AG04450 (cell line): ENCODE measurements at regions of chr16 and their contacts with region 1.

Region 1: GRCh38 chr16:67159593-67160406 is at the starts of genes FBXL8 and TRADD:
- DNase-seq: no peak
- H3K4me3 ChIP-seq: peak within 1 kb of the TSS; percentile 92
- H3K27ac ChIP-seq: peak within 1 kb of the TSS; percentile 31
- H3K27me3 ChIP-seq: peaks cover 30% of the 10 kb centered on the region
- CTCF ChIP-seq: peak; percentile 64
- polyA plus RNA-seq, gene FBXL8: 2.7 and 3.2 TPM in 2 replicates
- polyA plus RNA-seq, gene TRADD: 9.4 and 10.9 TPM in 2 replicates

Region 2: DNA sequence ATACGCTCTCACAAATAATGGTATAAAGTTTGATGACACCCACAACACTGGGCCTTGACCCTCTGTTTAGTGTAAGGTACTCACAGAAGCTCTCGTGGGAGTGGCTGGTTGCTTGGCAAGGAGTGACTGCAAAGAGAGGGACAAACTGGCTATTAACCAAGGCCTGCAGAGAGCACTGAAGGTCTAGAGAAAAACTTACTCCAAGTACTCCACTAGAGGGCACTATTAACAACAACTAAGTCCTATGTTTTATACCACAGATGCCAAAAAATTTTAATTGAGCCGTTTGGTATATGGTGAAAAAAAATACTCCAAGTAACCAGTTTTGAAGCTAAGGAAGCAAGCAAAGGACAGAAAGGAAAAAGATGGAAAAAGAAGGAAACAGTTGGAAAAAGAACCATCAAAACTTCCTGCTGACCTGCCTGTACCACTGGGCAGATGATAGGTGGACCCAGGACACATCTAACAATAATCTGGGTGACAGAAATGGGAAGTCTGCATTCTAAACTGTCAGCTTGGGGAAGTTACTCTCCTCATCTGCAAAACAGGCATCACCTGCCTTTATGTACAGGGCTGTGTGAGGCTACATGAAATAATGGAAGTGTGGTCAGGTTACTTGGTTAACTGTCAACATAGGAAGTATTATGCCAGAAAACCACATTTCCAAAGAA is 431.5 kb before region 1 on chr16:
- CTCF ChIA-PET with region 1: no interaction called
- POLR2A ChIA-PET with region 1: no interaction called
- DNase-seq: no peak
- H3K4me3 ChIP-seq: no peak overlapping the region
- H3K27ac ChIP-seq: no peak overlapping the region
- H3K27me3 ChIP-seq: no peaks in the 10 kb centered on the region
- CTCF ChIP-seq: peak; percentile 66

Region 3: DNA sequence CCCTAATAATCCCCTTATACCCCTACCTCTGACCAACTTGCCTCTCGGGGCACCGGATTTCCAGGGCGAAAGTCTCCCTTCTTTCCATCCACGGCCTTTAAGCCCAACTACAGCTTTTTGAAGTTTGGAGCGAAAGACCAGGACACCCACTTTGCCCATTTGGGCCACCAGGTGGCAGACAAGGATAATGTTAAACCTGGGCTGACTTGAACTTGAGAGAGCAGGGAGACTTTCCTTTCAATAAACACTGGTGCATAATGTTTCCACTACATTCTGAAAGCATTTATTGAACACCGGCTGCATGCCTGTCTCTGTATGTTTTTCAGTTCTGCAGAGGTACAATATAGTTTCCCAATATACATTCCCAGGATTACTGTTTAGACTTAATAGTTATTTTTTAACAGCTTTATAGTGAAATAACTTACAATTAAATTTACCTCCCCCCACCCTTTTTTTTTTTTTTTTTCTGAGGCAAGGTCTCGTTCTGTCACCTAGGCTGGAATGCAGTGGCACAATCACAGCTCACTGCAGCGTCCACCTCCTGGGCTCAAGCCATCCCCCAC is 205.6 kb before region 1 on chr16:
- CTCF ChIA-PET with region 1: interaction called, 29 read pairs
- POLR2A ChIA-PET with region 1: interaction called, 4 read pairs
- DNase-seq: peak; percentile 59
- H3K4me3 ChIP-seq: no peak overlapping the region
- H3K27ac ChIP-seq: no peak overlapping the region
- H3K27me3 ChIP-seq: peaks cover 21% of the 10 kb centered on the region
- CTCF ChIP-seq: peak; percentile 89

Region 4: GRCh38 chr16:66977341-66978113 is 182.3 kb before region 1 on chr16:
- CTCF ChIA-PET with region 1: interaction called, 24 read pairs
- POLR2A ChIA-PET with region 1: no interaction called
- DNase-seq: peak; percentile 56
- H3K4me3 ChIP-seq: no peak overlapping the region
- H3K27ac ChIP-seq: no peak overlapping the region
- H3K27me3 ChIP-seq: no peaks in the 10 kb centered on the region
- CTCF ChIP-seq: peak; percentile 94

Region 5: GRCh38 chr16:67109407-67110135 is 50.2 kb before region 1 on chr16 and contains the start of gene PHAF1:
- CTCF ChIA-PET with region 1: interaction called, 12 read pairs
- POLR2A ChIA-PET with region 1: no interaction called
- DNase-seq: peak; percentile 64
- H3K4me3 ChIP-seq: peak within 1 kb of the TSS; percentile 88
- H3K27ac ChIP-seq: peak within 1 kb of the TSS; percentile 68
- H3K27me3 ChIP-seq: no peaks in the 10 kb centered on the region
- CTCF ChIP-seq: no peak
- polyA plus RNA-seq, gene PHAF1: 24.6 and 26.1 TPM in 2 replicates

Region 6: GRCh38 chr16:67170168-67170947 is 10.6 kb after region 1 on chr16 and contains the start of gene NOL3:
- CTCF ChIA-PET with region 1: interaction called, 13 read pairs
- POLR2A ChIA-PET with region 1: interaction called, 9 read pairs
- DNase-seq: peak; percentile 36
- H3K4me3 ChIP-seq: peak within 1 kb of the TSS; percentile 58
- H3K27ac ChIP-seq: peak within 1 kb of the TSS; percentile 80
- H3K27me3 ChIP-seq: peaks cover 25% of the 10 kb centered on the region
- CTCF ChIP-seq: no peak
- polyA plus RNA-seq, gene NOL3: 8.2 and 10.7 TPM in 2 replicates